ENCODE measurements at regions of chr1 and their contacts with region 1.

Region 1: DNA sequence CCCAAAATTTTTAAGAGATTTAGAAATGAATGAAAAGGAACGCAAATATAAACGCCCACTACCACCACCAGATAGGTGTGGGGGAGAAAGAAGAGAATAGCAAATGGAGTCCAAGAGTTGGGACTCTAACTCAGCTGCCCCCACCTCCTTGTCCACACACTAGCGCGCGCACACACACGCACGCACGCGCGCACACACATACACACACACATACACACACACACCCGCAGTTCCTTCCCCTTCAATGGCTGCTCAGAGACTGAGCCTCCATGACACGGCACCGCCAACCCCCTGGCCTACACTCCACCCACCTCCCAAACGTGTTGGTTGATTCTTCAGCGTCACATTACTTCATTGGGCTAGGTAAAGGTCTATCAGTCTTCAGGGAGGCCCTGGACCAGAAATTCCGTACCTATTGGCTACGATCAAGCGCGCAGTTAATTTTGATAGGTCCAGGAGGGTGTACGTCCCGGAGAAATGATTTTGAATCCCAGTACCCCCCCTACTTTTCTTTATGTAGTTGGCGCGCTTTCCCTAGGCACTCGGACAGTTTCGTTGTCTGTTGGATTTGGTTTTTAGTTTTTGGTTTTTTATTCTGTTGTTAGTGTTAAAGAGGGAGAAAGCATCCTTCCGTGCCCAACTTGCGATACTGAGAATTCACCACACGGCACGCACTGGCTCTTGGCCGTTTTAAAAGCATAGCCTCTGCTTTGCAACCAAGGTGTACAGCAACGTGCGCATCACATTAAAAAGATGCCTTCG is at the start of gene ANP32E:
- DNase-seq: peak; percentile 87
- ATAC-seq: peak; percentile 84
- H3K4me3 Mint-ChIP-seq: no peak within 1 kb of the TSS
- H3K27ac Mint-ChIP-seq: peak within 1 kb of the TSS; percentile 97
- H3K4me1 Mint-ChIP-seq: peaks cover 24% of the 10 kb centered on the region
- H3K27me3 Mint-ChIP-seq: peaks cover 3% of the 10 kb centered on the region
- total RNA-seq, gene ANP32E: 113 to 115 TPM

Region 2: DNA sequence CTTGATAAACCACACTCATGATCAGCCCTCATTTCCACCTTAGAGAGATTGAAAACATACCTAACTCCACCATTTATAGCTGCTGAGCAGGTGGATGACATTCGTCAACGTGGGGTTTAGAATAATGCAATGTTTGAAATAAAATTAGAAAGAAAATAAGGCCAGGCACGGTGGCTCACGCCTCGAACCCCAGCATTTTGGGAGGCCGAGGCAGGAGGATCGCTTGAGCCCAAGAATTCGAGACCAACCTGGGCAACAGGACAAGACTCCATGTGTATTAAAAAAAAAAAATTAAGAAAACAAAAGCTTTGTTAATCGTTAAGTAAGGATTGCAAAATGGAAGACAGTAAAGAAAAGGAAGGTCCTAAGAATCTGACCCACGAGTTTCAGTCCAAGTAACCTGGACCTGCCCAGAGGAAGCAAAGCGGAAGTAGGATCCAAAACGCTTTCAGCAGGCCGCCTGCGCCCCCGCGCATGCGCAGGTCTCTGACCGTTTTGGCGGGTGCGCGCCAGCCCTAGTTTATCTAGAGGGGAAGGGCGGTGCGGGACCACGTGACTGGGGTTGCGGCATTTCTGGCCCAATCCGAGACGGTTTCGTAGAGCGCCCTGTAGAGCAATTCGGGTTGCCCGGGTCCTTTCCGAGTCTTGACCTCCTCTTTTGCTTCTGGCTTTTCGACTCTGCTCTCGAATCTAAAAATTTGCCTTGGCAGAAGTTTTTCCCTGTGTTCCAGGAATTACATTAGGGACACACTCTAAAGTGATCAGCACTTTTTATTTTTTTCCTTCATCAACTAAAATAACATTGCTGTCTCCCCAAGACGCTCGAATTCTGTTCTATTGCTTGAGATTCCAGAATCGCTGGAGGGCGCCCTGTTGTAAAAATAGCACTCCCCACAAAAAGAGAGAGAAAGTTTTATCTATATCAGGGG is 22.6 kb before region 1 on chr1:
- POLR2A ChIA-PET with region 1: interaction called, 21 read pairs
- DNase-seq: peak; percentile 88
- ATAC-seq: peak; percentile 100
- H3K4me3 Mint-ChIP-seq: peak overlapping the region; percentile 85
- H3K27ac Mint-ChIP-seq: peak overlapping the region; percentile 95
- H3K4me1 Mint-ChIP-seq: peaks cover 15% of the 10 kb centered on the region
- H3K27me3 Mint-ChIP-seq: peaks cover 5% of the 10 kb centered on the region

Region 3: DNA sequence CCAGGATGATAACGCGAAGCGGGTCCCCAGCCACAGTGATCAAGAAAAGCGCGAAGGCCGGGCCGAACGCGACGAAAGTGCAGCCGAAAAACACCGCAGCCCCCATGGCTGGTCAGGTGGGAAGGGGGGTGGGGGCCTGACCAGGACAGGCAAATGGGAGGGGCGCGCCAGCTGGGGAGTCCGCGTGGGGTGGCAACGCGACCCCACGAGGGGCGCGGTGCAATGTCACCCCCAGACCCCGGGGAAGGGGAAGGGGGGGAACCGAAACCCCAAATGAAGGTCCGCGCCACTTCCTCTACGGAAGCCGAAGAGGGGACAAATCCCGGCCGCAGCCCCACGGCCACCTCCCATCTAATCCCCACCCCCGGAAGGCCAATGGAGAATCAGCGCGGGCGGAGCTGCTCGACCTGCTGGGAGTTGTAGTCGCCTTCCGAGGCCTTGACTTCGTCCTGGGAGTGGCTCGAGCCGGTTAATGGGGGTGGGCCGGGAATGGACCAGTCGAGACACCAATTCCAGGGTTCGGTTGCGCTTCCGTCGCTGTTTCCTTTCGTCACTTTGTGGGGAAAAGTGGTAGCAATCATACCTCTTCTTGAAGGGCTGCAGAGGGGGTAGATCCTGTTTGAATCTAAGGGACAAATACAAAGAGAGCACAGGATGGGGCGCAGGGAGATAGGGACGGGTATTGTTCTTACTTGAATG is 32.8 kb after region 1 on chr1 and contains the start of gene APH1A:
- POLR2A ChIA-PET with region 1: interaction called, 12 read pairs
- DNase-seq: peak; percentile 90
- ATAC-seq: peak; percentile 97
- H3K4me3 Mint-ChIP-seq: peak within 1 kb of the TSS; percentile 95
- H3K27ac Mint-ChIP-seq: peak within 1 kb of the TSS; percentile 99
- H3K4me1 Mint-ChIP-seq: peaks cover 26% of the 10 kb centered on the region
- H3K27me3 Mint-ChIP-seq: peaks cover 2% of the 10 kb centered on the region
- total RNA-seq, gene APH1A: 127 to 128 TPM

Measured in activated naive CD8-positive, alpha-beta T cell treated with anti-CD3 and anti-CD28 coated beads, Interleukin-2, amount 10 ng/mL, durations not matched to agents 7 days and 5 days (primary cell).